Left ventricle myocardium inferior (tissue), 1 donor: ENCODE measurements at regions of chr2 and their contacts with region 1.

Region 1: GRCh38 chr2:205675861-205676516 is 6.3 kb upstream of the NRP2 start:
- DNase-seq: no peak
- H3K4me3 ChIP-seq: no peak overlapping the region
- H3K27ac ChIP-seq: no peak overlapping the region
- H3K4me1 ChIP-seq: peaks cover 5% of the 10 kb centered on the region
- H3K27me3 ChIP-seq: peaks cover 32% of the 10 kb centered on the region
- CTCF ChIP-seq: peak; percentile 85

Region 2: DNA sequence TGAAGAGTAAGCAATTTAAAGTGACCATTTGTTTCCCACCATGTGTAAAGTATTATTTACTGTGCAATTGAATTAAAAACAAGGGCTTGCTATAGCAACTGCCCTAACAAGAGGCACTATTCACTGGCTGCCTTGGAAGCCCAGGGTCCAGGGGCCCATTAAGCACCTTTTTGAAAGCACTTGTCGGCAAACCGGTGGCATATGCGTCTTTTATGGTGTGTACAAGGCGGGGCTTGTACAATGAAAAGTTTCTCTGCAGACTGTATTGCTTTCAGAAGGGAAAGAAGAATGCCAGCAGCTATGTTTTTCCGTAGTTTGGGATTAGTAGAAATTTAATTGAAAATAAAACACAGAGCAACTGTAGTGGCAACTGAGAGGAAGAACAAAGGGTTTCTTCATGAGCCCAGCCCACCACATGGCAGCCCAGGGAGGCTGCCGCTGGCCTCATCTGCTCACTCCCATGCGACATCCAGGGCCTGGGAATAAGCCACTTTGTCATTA is 1410.3 kb before region 1 on chr2:
- intact Hi-C with region 1: loop called (anchors 5 kb)
- DNase-seq: no peak
- H3K4me3 ChIP-seq: no peak overlapping the region
- H3K27ac ChIP-seq: no peak overlapping the region
- H3K4me1 ChIP-seq: peaks cover 8% of the 10 kb centered on the region
- H3K27me3 ChIP-seq: peaks cover 9% of the 10 kb centered on the region
- CTCF ChIP-seq: no peak

Region 3: GRCh38 chr2:204325468-204325867 is 1350.5 kb before region 1 on chr2:
- intact Hi-C with region 1: loop called (anchors 10 kb)
- DNase-seq: no peak
- H3K4me3 ChIP-seq: no peak overlapping the region
- H3K27ac ChIP-seq: no peak overlapping the region
- H3K4me1 ChIP-seq: peaks cover 19% of the 10 kb centered on the region
- H3K27me3 ChIP-seq: peaks cover 5% of the 10 kb centered on the region
- CTCF ChIP-seq: peak; percentile 92

Region 4: DNA sequence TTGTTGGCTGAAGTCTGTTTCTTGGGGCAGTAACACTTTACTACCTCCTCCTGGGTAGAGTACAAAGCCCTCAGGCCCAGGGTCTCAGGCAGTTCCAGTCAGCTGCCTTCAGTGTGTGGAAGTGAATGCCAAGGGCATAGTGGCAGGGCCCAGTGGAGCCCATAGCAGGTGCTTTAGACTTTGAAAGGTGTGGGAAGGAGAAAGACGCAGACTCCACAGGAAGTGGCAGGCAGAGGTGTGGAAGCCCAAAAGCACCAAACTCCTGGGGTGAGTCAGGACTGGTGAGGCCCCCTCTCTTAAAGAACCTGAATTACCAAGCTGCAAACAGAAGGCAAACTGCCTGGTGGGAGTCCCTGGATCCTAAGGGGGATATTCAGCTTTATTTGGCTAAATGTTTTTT is 812.6 kb after region 1 on chr2:
- intact Hi-C with region 1: no loop called
- DNase-seq: no peak
- H3K4me3 ChIP-seq: no peak overlapping the region
- H3K27ac ChIP-seq: peak overlapping the region; percentile 24
- H3K4me1 ChIP-seq: peaks cover 17% of the 10 kb centered on the region
- H3K27me3 ChIP-seq: no peaks in the 10 kb centered on the region
- CTCF ChIP-seq: no peak